PC-9 (cell line): ENCODE measurements at regions of chr9 and their contacts with region 1.

Region 1: DNA sequence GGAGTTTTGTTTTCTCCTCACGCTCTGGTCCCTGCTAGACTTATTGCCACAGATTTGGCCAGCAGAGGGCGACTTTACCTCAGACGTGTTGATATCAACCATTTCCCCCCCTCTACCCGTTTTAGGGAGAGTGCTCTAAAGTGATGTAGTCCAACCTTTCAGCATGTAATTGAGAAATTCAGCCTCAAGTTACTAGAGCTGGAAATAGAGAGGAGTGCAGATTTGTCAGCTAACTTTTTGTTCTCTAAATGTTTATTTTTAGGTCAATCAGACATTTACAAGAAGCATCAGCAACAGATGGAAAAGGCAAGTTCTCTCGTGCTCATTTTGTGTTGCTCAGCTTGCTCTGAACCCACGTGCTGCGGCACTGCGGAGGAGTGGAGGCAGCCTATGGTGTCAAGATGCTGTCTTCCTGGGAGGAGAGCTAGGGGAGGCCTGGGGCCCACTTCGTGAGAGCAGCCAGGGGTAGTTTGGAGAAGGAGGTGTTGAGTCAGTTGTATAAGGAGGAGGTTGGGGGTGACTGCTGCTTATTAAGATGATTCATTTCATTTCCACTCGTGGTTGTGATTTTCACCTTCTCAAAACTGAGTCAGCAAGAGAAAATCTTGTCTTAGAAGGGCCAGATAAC is 53.6 kb downstream of the GPR107 start:
- DNase-seq: peak in 1 of 2 experiments; percentile 69
- H3K4me3 ChIP-seq: no peak overlapping the region
- H3K27ac ChIP-seq: no peak overlapping the region
- H3K4me1 ChIP-seq: no peaks in the 10 kb centered on the region
- H3K27me3 ChIP-seq: no peaks in the 10 kb centered on the region
- CTCF ChIP-seq: peak; percentile 89

Region 2: GRCh38 chr9:129752915-129753729 is 354.2 kb before region 1 on chr9 and contains the start of gene PTGES:
- CTCF ChIA-PET with region 1: no interaction called
- POLR2A ChIA-PET with region 1: no interaction called
- intact Hi-C with region 1: no loop called
- DNase-seq: peak; percentile 84 to 94
- H3K4me3 ChIP-seq: peak within 1 kb of the TSS; percentile 85
- H3K27ac ChIP-seq: peak within 1 kb of the TSS; percentile 94
- H3K4me1 ChIP-seq: peaks cover 61% of the 10 kb centered on the region
- H3K27me3 ChIP-seq: no peaks in the 10 kb centered on the region
- CTCF ChIP-seq: no peak
- total RNA-seq, gene PTGES: 116 and 119 TPM in 2 replicates

Region 3: GRCh38 chr9:130088051-130088450 is 19.3 kb before region 1 on chr9:
- CTCF ChIA-PET with region 1: no interaction called
- POLR2A ChIA-PET with region 1: no interaction called
- intact Hi-C with region 1: no loop called
- DNase-seq: no peak
- H3K4me3 ChIP-seq: no peak overlapping the region
- H3K27ac ChIP-seq: no peak overlapping the region
- H3K4me1 ChIP-seq: no peaks in the 10 kb centered on the region
- H3K27me3 ChIP-seq: no peaks in the 10 kb centered on the region
- CTCF ChIP-seq: no peak

Region 4: GRCh38 chr9:130147910-130148309 is 40.6 kb after region 1 on chr9:
- CTCF ChIA-PET with region 1: no interaction called
- POLR2A ChIA-PET with region 1: no interaction called
- intact Hi-C with region 1: no loop called
- DNase-seq: no peak
- H3K4me3 ChIP-seq: no peak overlapping the region
- H3K27ac ChIP-seq: no peak overlapping the region
- H3K4me1 ChIP-seq: peaks cover 8% of the 10 kb centered on the region
- H3K27me3 ChIP-seq: no peaks in the 10 kb centered on the region
- CTCF ChIP-seq: no peak

Region 5: GRCh38 chr9:130235897-130236668 is 128.7 kb after region 1 on chr9:
- CTCF ChIA-PET with region 1: interaction called, 5 read pairs
- POLR2A ChIA-PET with region 1: no interaction called
- intact Hi-C with region 1: loop called (anchors 1 kb)
- DNase-seq: peak in 1 of 2 experiments; percentile 61
- H3K4me3 ChIP-seq: no peak overlapping the region
- H3K27ac ChIP-seq: no peak overlapping the region
- H3K4me1 ChIP-seq: no peaks in the 10 kb centered on the region
- H3K27me3 ChIP-seq: no peaks in the 10 kb centered on the region
- CTCF ChIP-seq: peak; percentile 99

Region 6: DNA sequence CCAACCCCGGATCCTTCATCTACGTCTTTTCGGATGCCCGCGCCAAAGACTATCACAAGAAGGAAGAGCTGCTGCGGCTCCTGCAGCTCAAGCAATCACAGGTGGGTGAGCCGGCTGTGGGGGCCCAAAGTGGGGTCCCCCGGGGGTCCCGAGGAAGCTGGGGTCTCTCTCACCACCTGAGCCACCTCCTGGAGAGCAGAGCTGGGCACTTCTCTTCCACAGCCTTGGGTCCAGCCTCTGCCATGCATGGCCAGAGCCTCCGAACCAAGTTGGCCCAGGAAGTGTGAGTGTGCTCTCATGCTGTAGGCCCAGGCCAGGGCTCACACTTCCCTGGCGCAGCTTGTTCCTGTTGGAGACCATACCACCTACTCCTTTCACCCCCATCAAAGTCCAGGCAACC is 177.9 kb after region 1 on chr9:
- CTCF ChIA-PET with region 1: interaction called, 20 read pairs
- POLR2A ChIA-PET with region 1: no interaction called
- intact Hi-C with region 1: no loop called
- DNase-seq: no peak
- H3K4me3 ChIP-seq: no peak overlapping the region
- H3K27ac ChIP-seq: no peak overlapping the region
- H3K4me1 ChIP-seq: no peaks in the 10 kb centered on the region
- H3K27me3 ChIP-seq: peaks cover 68% of the 10 kb centered on the region
- CTCF ChIP-seq: no peak

Region 7: GRCh38 chr9:130343445-130343918 is 236.1 kb after region 1 on chr9:
- CTCF ChIA-PET with region 1: no interaction called
- POLR2A ChIA-PET with region 1: no interaction called
- intact Hi-C with region 1: loop called (anchors 5 kb)
- DNase-seq: no peak
- H3K4me3 ChIP-seq: no peak overlapping the region
- H3K27ac ChIP-seq: no peak overlapping the region
- H3K4me1 ChIP-seq: no peaks in the 10 kb centered on the region
- H3K27me3 ChIP-seq: no peaks in the 10 kb centered on the region
- CTCF ChIP-seq: peak; percentile 85

Region 8: GRCh38 chr9:130417602-130418001 is 310.3 kb after region 1 on chr9:
- CTCF ChIA-PET with region 1: interaction called, 6 read pairs
- POLR2A ChIA-PET with region 1: no interaction called
- intact Hi-C with region 1: loop called (anchors 1 kb)
- DNase-seq: peak in 1 of 2 experiments; percentile 32
- H3K4me3 ChIP-seq: no peak overlapping the region
- H3K27ac ChIP-seq: no peak overlapping the region
- H3K4me1 ChIP-seq: peaks cover 15% of the 10 kb centered on the region
- H3K27me3 ChIP-seq: no peaks in the 10 kb centered on the region
- CTCF ChIP-seq: 0 out of 2 replicates have a peak, but pooled peaks have one; percentile 29

Region 9: DNA sequence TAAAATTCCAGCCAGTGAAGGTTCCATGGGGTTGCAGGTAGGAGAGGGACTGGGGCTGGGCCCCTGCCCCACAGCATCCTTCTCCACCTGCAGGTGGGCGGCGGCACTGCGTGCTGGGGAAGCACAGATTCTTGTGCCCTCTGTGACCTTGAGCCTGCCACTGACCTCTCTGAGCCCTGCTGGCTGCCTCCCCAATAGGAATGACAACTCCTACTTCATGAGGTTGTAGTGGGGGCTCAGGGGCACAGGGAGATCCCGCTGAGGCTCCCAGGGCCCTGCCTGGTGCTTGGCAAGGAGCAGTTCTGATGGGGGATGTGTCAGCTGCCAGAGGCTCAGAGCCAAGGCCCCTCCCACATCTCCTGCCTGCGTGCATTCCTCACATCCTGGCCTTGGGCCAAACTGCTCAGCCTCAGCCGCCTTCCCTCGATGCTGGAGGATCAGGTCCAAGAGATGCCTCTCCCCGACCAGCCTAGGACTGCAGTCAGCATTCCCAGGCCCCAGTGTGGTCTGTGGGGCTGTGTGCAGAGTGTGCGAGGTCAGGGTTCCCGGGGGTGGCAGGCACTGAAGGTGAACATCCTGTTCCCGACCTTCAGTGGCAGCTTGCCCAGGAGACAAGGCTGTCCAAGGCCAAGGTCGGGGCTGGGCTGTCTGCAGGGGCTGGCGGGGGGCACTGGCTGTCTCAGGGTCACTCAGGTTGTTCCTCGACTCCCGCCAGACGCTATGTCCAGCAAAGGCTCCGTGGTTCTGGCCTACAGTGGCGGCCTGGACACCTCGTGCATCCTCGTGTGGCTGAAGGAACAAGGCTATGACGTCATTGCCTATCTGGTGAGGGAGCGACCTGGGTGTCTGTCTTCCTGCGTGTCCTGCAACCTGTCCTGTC is 344.4 kb after region 1 on chr9:
- CTCF ChIA-PET with region 1: interaction called, 7 read pairs
- POLR2A ChIA-PET with region 1: no interaction called
- intact Hi-C with region 1: loop called (anchors 5 kb)
- DNase-seq: peak; percentile 69 to 94
- H3K4me3 ChIP-seq: no peak overlapping the region
- H3K27ac ChIP-seq: no peak overlapping the region
- H3K4me1 ChIP-seq: peaks cover 31% of the 10 kb centered on the region
- H3K27me3 ChIP-seq: no peaks in the 10 kb centered on the region
- CTCF ChIP-seq: peak; percentile 88

Region 10: GRCh38 chr9:131423171-131423581 is 1315.8 kb after region 1 on chr9:
- CTCF ChIA-PET with region 1: no interaction called
- POLR2A ChIA-PET with region 1: no interaction called
- intact Hi-C with region 1: no loop called
- DNase-seq: peak; percentile 53 to 66
- H3K4me3 ChIP-seq: no peak overlapping the region
- H3K27ac ChIP-seq: 0 out of 2 replicates have a peak overlapping the region, but pooled peaks have one; percentile 47
- H3K4me1 ChIP-seq: peaks cover 38% of the 10 kb centered on the region
- H3K27me3 ChIP-seq: no peaks in the 10 kb centered on the region
- CTCF ChIP-seq: no peak